ENCODE measurements at regions of chr7 and their contacts with region 1.

Region 1: DNA sequence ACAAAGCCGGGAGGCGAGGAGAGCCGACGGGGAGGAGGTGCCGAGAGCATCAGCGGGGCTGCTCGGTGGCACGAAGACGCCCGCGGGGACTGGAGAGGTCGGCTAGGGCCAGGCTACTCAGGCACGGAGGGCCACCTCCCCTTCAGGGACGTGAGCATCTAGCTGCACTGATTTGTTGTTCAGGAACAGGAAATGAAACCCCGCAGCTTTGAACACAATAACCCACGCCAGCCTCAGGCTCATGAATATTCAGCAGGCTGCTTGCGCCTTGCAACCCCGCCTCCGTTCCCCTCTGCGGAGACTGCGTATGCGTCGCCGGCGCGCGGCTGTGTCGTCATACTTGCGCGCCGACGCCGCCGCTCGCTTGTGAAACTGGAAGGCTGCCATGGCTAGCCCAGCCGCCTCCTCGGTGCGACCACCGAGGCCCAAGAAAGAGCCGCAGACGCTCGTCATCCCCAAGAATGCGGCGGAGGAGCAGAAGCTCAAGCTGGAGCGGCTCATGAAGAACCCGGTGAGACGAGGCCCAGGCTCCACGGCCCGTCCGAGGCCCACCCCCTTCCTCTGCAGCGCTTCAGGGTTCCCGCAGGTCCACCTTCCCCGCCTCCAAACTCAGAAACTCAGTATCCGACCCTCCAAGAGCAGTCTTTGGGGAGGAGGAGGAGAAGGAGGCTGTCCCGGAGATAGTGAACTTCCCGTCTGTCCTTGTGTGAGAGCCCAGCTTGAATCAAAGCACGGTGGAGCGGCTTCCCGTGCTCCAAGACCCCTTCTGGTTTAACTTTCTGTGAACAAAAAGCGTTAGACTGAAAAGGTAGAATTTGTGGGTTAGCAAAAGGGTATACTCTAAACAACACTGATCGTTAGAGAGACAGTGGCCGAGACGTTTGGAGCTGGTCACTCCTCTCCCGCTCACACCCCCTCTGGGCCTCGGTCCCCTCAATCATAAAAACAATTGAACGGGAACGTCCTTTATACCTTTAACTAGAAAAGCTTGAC is at the start of gene PRKRIP1:
- DNase-seq: peak; percentile 91
- ATAC-seq: peak; percentile 97
- H3K4me3 Mint-ChIP-seq: peak within 1 kb of the TSS; percentile 93
- H3K27ac Mint-ChIP-seq: peak within 1 kb of the TSS; percentile 93
- H3K4me1 Mint-ChIP-seq: peaks cover 19% of the 10 kb centered on the region
- H3K27me3 Mint-ChIP-seq: no peaks in the 10 kb centered on the region
- total RNA-seq, gene PRKRIP1: 26.2 to 31.4 TPM

Region 2: GRCh38 chr7:102045681-102046372 is 350.5 kb before region 1 on chr7:
- CTCF ChIA-PET with region 1: no interaction called
- POLR2A ChIA-PET with region 1: no interaction called
- intact Hi-C with region 1: no loop called
- DNase-seq: no peak
- ATAC-seq: no peak
- H3K4me3 Mint-ChIP-seq: no peak overlapping the region
- H3K27ac Mint-ChIP-seq: no peak overlapping the region
- H3K4me1 Mint-ChIP-seq: peaks cover 12% of the 10 kb centered on the region
- H3K27me3 Mint-ChIP-seq: no peaks in the 10 kb centered on the region

Region 3: GRCh38 chr7:102286237-102287110 is 109.8 kb before region 1 on chr7 and contains the start of gene SH2B2:
- CTCF ChIA-PET with region 1: interaction called, 4 read pairs
- POLR2A ChIA-PET with region 1: no interaction called
- intact Hi-C with region 1: loop called in 1 of 2 experiments (anchors 2 kb)
- DNase-seq: peak; percentile 63
- ATAC-seq: peak; percentile 34
- H3K4me3 Mint-ChIP-seq: peak within 1 kb of the TSS; percentile 56
- H3K27ac Mint-ChIP-seq: no peak within 1 kb of the TSS
- H3K4me1 Mint-ChIP-seq: peaks cover 34% of the 10 kb centered on the region
- H3K27me3 Mint-ChIP-seq: peaks cover 12% of the 10 kb centered on the region
- total RNA-seq, gene SH2B2: 2.7 to 3.2 TPM

Region 4: DNA sequence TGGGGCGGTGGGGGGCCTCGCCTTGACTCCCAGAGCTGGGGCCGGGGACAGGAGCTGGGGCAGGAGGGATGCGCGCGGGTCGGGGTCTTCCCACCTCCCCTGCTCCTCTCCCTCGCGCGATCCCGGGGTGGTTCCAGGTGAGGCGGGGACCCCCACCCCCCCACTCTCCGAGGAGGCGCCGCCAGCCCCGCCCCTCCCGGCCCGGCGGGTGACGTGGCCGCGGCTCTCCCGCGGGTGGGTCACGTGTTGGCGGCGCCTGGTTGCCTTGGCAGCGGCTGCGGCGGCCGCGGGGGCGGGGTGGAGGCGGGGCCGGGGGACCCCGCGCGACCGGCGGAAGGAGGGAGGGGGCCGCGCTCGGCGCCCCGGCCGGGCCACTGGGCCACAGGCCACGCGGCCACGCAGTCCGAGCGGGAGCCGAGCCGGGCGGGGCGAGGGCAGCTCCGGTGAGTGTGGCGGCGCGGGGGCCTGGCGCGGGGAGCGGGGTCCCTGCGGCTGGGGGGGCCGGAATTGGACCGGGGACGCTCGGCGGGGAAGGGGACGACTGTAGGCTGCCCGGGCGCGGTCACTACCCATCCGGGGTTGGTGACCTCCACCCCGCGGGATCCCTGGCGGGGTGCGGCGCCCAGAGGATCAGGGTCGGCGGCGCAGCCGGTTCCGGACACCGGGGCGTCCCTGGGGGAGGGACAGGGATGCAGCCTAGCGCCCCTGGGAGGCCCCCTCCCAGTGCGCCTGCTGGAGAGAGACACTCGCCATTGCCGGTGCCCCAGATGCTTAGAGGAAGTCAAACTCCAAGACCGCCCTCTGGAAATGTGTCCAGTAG is 37.1 kb after region 1 on chr7 and contains the start of gene ORAI2:
- CTCF ChIA-PET with region 1: no interaction called
- POLR2A ChIA-PET with region 1: no interaction called
- intact Hi-C with region 1: loop called (anchors 1 to 5 kb)
- DNase-seq: peak; percentile 92
- ATAC-seq: peak; percentile 63
- H3K4me3 Mint-ChIP-seq: peak within 1 kb of the TSS; percentile 78
- H3K27ac Mint-ChIP-seq: peak within 1 kb of the TSS; percentile 69
- H3K4me1 Mint-ChIP-seq: peaks cover 41% of the 10 kb centered on the region
- H3K27me3 Mint-ChIP-seq: no peaks in the 10 kb centered on the region
- total RNA-seq, gene ORAI2: 20.8 to 25.1 TPM